Activated CD4-positive, alpha-beta T cell treated with anti-CD3 and anti-CD28 coated beads, Interleukin-2, amount 10 ng/mL, durations not matched to agents 24 days and 14 days (primary cell): ENCODE measurements at regions of chr6 and their contacts with region 1.

Region 1: GRCh38 chr6:8063761-8064637 is at the start of gene BLOC1S5:
- DNase-seq: peak; percentile 99
- H3K4me3 Mint-ChIP-seq: peak within 1 kb of the TSS; percentile 97
- H3K27ac Mint-ChIP-seq: peak within 1 kb of the TSS; percentile 98
- H3K4me1 Mint-ChIP-seq: peaks cover 23% of the 10 kb centered on the region
- H3K27me3 Mint-ChIP-seq: no peaks in the 10 kb centered on the region
- total RNA-seq, gene BLOC1S5: 15.7 and 19.6 TPM in 2 replicates

Region 2: GRCh38 chr6:7312616-7313504 is 751.1 kb before region 1 on chr6 and contains the start of gene SSR1:
- intact Hi-C with region 1: loop called (anchors 10 kb)
- DNase-seq: peak; percentile 99
- H3K4me3 Mint-ChIP-seq: peak within 1 kb of the TSS; percentile 96
- H3K27ac Mint-ChIP-seq: peak within 1 kb of the TSS; percentile 98
- H3K4me1 Mint-ChIP-seq: peaks cover 38% of the 10 kb centered on the region
- H3K27me3 Mint-ChIP-seq: no peaks in the 10 kb centered on the region
- total RNA-seq, gene SSR1: 157 and 162 TPM in 2 replicates

Region 3: GRCh38 chr6:7725849-7726415 is 338.1 kb before region 1 on chr6 and contains the start of gene BMP6:
- intact Hi-C with region 1: loop called (anchors 1 kb)
- DNase-seq: peak; percentile 93
- H3K4me3 Mint-ChIP-seq: peak within 1 kb of the TSS; percentile 87
- H3K27ac Mint-ChIP-seq: no peak within 1 kb of the TSS
- H3K4me1 Mint-ChIP-seq: peaks cover 17% of the 10 kb centered on the region
- H3K27me3 Mint-ChIP-seq: peaks cover 72% of the 10 kb centered on the region
- total RNA-seq, gene BMP6: 0.50 and 0.56 TPM in 2 replicates

Region 4: GRCh38 chr6:8017276-8017701 is 46.7 kb before region 1 on chr6:
- intact Hi-C with region 1: loop called (anchors 2 kb)
- DNase-seq: peak; percentile 76
- H3K4me3 Mint-ChIP-seq: peak overlapping the region; percentile 92
- H3K27ac Mint-ChIP-seq: peak overlapping the region; percentile 94
- H3K4me1 Mint-ChIP-seq: peaks cover 10% of the 10 kb centered on the region
- H3K27me3 Mint-ChIP-seq: no peaks in the 10 kb centered on the region

Region 5: DNA sequence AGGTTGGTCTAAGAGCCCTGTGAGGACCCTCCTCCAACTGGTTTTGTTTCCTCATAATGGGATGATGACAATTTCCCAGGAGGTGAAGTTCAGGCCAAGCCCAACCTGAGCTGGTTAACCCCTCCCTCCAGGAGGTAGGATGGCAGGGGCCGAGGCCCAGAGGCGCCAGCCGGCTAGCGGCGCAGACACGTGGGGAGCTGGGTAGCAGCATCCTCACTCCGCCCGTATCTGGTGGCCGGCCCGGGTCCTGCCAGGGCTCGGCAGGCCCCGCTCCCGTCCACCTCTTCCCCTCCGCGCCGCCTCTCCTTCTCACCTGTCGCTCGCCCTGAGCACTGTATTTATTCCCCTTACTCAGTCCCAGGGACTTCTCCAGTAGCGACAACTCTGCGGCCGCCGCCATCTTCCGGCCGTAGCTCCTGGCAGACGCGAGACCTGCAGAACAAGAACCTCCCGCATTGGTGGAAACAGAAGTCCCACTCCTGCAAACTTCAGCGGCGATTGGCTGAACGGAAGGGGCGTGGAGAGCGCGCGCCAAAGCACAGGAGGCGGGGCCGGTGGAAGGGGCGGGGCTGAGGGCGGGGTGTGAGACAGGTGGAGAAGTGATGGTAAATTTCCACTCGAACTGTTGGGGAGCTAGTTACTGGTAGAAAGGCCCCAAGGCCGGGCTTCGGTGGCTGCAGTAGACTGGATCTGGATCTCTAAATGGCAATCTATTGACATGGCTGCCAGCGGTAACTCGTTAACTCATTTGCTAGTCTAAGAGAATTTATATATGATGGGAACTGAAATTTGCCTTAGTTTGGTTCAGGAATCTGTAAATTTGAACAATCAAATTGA is 38.3 kb after region 1 on chr6 and contains the start of gene EEF1E1:
- intact Hi-C with region 1: loop called (anchors 1 kb)
- DNase-seq: peak; percentile 97
- H3K4me3 Mint-ChIP-seq: peak within 1 kb of the TSS; percentile 95
- H3K27ac Mint-ChIP-seq: peak within 1 kb of the TSS; percentile 99
- H3K4me1 Mint-ChIP-seq: peaks cover 24% of the 10 kb centered on the region
- H3K27me3 Mint-ChIP-seq: peaks cover 15% of the 10 kb centered on the region
- total RNA-seq, gene EEF1E1: 93.6 and 95.9 TPM in 2 replicates

Region 6: GRCh38 chr6:8435160-8435852 is 371.3 kb after region 1 on chr6 and contains the start of gene SLC35B3:
- intact Hi-C with region 1: loop called (anchors 1 kb)
- DNase-seq: peak; percentile 100
- H3K4me3 Mint-ChIP-seq: peak within 1 kb of the TSS; percentile 97
- H3K27ac Mint-ChIP-seq: peak within 1 kb of the TSS; percentile 99
- H3K4me1 Mint-ChIP-seq: peaks cover 32% of the 10 kb centered on the region
- H3K27me3 Mint-ChIP-seq: peaks cover 2% of the 10 kb centered on the region
- total RNA-seq, gene SLC35B3: 7.1 and 7.3 TPM in 2 replicates